GM10248 (cell line): ENCODE measurements at regions of chrX and their contacts with region 1.

Region 1: GRCh38 chrX:118847676-118848075 is 24.1 kb downstream of the ZCCHC12 start:
- DNase-seq: peak; percentile 44
- CTCF ChIP-seq: peak; percentile 44

Region 2: DNA sequence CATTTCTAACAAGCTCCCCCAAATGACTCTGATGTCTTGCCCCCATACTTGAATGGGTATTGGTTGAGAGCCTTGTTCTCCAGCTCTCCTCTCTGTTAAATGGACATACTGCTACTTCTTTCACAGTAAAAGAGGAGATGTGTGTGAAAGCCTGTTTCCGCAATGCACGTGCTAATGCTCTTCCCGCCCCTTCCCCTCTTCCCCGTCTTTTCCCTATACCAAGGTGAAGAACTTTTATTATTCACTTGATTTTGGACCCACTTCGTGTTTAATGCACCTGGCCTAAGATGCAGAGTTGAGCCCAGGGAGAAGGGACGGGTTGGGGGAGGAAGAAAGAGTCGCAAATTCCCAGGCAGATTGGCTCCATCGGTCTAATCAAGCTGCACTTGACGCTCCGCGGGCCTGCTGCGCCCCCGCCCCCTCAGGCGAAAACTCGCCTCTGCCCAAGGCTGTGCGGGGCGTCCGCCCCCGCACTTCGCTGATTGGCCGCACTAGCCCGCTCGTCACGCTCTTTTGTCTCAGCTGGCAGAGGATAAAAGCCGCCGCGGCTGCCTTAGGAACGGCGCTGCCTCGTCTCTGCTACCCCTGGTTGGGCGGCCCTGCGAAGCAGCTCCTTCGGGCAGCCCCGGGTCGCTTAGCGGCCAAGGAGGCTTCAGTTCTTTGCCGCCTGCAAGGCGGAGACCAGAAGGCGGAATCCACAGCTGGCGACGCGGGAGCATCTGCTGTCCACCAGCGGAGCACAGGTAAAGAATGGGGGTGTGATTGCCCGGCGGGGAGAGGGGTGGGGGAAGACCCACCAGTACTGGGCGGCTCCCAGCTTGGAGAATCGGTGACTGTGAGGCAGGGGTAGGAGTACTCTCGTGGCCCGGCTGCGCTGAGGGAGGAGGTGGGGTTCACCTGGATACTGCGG is 24.2 kb before region 1 on chrX and contains the start of gene ZCCHC12:
- CTCF ChIA-PET with region 1: interaction called, 10 read pairs
- POLR2A ChIA-PET with region 1: no interaction called
- DNase-seq: peak; percentile 40
- CTCF ChIP-seq: no peak

Region 3: GRCh38 chrX:118872102-118872566 is 24.5 kb after region 1 on chrX:
- CTCF ChIA-PET with region 1: no interaction called
- POLR2A ChIA-PET with region 1: no interaction called
- DNase-seq: no peak
- CTCF ChIP-seq: no peak

Region 4: DNA sequence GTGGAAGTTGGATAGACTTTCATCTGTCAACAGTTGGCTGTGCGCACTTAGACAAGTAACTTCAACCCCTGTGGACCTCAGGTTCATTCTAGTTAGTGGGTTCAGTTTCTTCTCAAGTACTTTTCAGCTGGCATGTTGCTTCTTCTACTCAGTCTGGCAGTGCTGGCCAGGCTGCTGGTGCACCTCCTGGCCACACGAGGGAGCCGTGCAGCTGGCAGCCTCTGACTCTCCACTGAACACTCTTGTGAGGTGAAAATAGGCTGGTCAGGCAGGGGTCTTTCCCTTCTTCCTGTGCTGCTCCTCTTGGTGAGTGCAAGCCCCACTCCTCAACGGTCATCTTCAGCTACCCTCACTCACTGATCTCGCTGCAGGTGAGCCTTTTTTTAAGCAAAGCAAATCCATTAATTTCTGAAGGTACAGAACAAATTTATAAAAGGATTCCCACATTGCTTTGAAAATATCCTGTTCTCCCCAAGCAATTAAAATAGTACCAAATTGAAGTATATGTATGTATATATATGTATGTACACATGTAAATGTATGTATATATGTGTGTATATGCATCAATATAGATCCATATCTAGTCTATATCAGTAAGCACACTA is 157.3 kb after region 1 on chrX:
- CTCF ChIA-PET with region 1: interaction called, 25 read pairs
- POLR2A ChIA-PET with region 1: no interaction called
- DNase-seq: peak; percentile 63
- CTCF ChIP-seq: peak; percentile 87

Region 5: GRCh38 chrX:119067023-119067739 is 219.5 kb after region 1 on chrX:
- CTCF ChIA-PET with region 1: interaction called, 25 read pairs
- POLR2A ChIA-PET with region 1: no interaction called
- DNase-seq: peak; percentile 29
- CTCF ChIP-seq: peak; percentile 42